CD4-positive, alpha-beta memory T cell (primary cell): ENCODE measurements at regions of chr1 and their contacts with region 1.

Region 1: DNA sequence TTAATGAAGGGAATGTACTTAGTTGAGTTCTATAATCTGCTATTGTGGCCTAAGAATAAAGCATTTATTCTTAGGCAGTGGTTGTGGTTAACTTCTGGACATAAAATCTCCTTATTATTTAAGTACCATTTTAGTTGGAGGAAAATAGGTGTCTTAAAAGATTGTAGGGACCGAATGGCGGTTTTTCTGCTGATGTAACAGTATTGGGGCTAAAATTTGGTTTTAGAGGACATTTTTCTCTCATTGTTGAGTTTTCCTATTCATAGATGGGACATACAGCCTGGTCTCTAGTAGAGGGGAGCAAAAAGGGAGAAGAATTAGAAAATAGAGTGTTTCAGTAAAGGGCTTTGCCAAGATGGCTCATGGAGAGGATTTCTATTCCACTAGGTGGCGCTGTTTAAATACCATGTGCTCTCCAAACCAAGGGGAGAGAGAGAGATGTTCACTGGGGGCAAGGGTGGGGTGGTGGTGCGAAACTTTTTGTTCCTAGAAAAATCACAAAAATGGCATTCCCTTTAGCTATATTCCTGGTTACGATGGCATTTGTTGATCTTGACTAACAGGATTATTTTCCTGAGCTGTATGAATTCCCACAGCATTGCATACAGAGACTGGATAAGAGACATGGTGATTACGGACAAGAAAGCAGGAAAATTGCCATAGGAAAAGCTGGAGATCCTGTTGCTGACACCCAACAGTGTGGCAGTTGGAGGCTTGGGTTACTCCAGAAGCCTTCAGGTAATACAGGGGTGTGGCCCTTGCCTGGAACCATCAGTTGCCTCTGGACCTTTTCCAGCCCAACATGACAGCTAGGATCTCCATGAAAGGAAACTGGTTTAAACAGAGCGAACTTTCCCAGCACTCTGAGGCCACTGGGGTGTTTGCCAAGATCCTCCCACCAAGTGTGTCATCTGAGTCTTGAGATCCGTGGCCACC is 18.2 kb upstream of the FCGR2A start:
- DNase-seq: peak; percentile 60 to 67 (median 64)
- H3K4me3 ChIP-seq: no peak overlapping the region
- H3K4me3 Mint-ChIP-seq: no peak overlapping the region
- H3K27ac ChIP-seq: no peak overlapping the region
- H3K27ac Mint-ChIP-seq: peak overlapping the region in 1 of 7 donors; percentile 57
- H3K4me1 ChIP-seq: peaks cover 8% of the 10 kb centered on the region
- H3K4me1 Mint-ChIP-seq: peaks cover 11 to 28% (median 18%) of the 10 kb centered on the region in 4 donors
- H3K27me3 ChIP-seq: peaks cover 1% of the 10 kb centered on the region
- H3K27me3 Mint-ChIP-seq: peaks cover 7 to 18% of the 10 kb centered on the region in 2 donors

Region 2: DNA sequence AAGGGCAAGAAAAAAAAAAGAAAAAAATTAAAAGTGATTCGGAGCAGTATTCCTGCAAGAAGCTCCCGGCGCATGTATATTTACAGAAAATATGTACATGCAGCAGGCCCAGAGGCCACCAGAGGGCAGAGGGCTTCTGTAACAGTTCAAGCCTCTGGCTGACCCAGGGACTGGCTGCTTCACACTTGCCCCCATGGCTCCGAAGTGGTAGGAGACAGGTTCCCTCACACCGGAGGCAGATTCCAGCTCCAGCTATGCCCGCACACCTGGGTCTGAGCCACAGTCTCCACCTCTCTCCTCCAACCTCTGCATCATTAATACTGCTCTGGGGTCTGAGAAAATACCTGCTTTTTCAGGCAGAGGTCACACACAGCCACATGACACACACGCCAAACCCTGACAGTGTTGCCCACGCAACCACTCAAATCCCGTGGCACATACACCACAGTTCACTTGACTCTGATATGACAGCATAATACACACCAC is 415.1 kb before region 1 on chr1:
- CTCF ChIA-PET with region 1: no interaction called
- POLR2A ChIA-PET with region 1: no interaction called
- intact Hi-C with region 1: no loop called
- DNase-seq: peak in 4 of 5 donors; percentile 35 to 39 (median 37)
- H3K4me3 ChIP-seq: no peak overlapping the region
- H3K4me3 Mint-ChIP-seq: peak overlapping the region in 1 of 8 donors; percentile 17
- H3K27ac ChIP-seq: no peak overlapping the region
- H3K27ac Mint-ChIP-seq: peak overlapping the region in 6 of 7 donors; percentile 68 to 92 (median 72)
- H3K4me1 ChIP-seq: peaks cover 30% of the 10 kb centered on the region
- H3K4me1 Mint-ChIP-seq: peaks cover 24 to 56% (median 33%) of the 10 kb centered on the region in 4 donors
- H3K27me3 ChIP-seq: no peaks in the 10 kb centered on the region
- H3K27me3 Mint-ChIP-seq: no peaks in the 10 kb centered on the region

Region 3: GRCh38 chr1:161549652-161550051 is 62.6 kb after region 1 on chr1 and contains the start of gene FCGR3A:
- CTCF ChIA-PET with region 1: no interaction called
- POLR2A ChIA-PET with region 1: no interaction called
- intact Hi-C with region 1: loop called (anchors 10 kb)
- DNase-seq: no peak
- H3K4me3 ChIP-seq: no peak within 1 kb of the TSS
- H3K4me3 Mint-ChIP-seq: no peak within 1 kb of the TSS
- H3K27ac ChIP-seq: no peak within 1 kb of the TSS
- H3K27ac Mint-ChIP-seq: no peak within 1 kb of the TSS
- H3K4me1 ChIP-seq: peaks cover 8% of the 10 kb centered on the region
- H3K4me1 Mint-ChIP-seq: peaks cover 5 to 21% (median 12%) of the 10 kb centered on the region in 4 donors
- H3K27me3 ChIP-seq: no peaks in the 10 kb centered on the region
- H3K27me3 Mint-ChIP-seq: no peaks in the 10 kb centered on the region
- total RNA-seq, gene FCGR3A: 0.81 to 2.1 TPM

Region 4: GRCh38 chr1:161738627-161739287 is 251.7 kb after region 1 on chr1:
- CTCF ChIA-PET with region 1: interaction called, 51 read pairs
- POLR2A ChIA-PET with region 1: no interaction called
- intact Hi-C with region 1: loop called (anchors 1 kb)
- DNase-seq: peak; percentile 49 to 66 (median 55)
- H3K4me3 ChIP-seq: no peak overlapping the region
- H3K4me3 Mint-ChIP-seq: peak overlapping the region in 4 of 8 donors; percentile 11 to 61 (median 36)
- H3K27ac ChIP-seq: no peak overlapping the region
- H3K27ac Mint-ChIP-seq: peak overlapping the region; percentile 25 to 65 (median 37)
- H3K4me1 ChIP-seq: peaks cover 22% of the 10 kb centered on the region
- H3K4me1 Mint-ChIP-seq: peaks cover 3 to 30% (median 22%) of the 10 kb centered on the region in 4 donors
- H3K27me3 ChIP-seq: no peaks in the 10 kb centered on the region
- H3K27me3 Mint-ChIP-seq: no peaks in the 10 kb centered on the region